Aorta (tissue), 5 donors: ENCODE measurements at regions of chr1 and their contacts with region 1.

Region 1: GRCh38 chr1:27481994-27482620 is 7.9 kb downstream of the WASF2 start:
- DNase-seq: no peak
- ATAC-seq: no peak
- H3K4me3 ChIP-seq: no peak overlapping the region
- H3K27ac ChIP-seq: no peak overlapping the region
- H3K4me1 ChIP-seq: peaks cover 2 to 3% of the 10 kb centered on the region in 2 donors
- H3K27me3 ChIP-seq: no peaks in the 10 kb centered on the region

Region 2: DNA sequence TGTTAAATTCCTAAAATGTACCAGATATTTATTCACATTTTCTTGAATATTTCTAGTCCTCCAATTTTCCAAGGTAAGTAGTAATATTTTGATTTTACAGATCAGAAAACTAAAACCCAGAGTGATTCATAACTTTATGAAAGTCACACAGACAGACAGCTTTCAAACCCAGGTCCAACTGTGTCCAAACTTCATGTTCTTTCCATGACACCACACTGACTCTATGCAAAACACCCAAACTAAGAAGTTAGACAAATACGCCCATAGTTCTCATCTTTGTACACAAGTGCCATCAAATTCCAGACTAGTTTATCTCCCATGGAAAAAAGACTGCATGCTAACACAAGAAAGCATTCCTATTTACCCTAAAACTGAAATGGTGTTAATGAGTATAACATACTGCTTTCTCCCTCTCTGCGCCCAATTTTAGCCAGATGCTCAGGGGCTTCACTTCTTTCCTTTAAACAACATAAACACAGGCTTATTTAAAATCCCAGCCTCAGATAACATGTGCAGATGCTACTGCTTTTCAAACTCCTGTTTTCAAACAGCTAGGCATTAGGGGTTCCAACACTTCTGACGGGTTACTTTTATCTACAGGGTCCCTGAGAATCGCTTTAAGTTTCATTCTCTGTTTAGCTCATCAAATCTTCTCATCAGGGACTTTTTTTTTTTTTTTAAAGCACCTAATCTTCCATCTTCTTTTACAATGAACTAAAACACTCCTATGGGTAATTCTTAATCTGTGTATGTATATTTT is 36.8 kb before region 1 on chr1:
- intact Hi-C with region 1: loop called in 1 of 2 experiments (anchors 5 kb)
- DNase-seq: no peak
- ATAC-seq: no peak
- H3K4me3 ChIP-seq: no peak overlapping the region
- H3K27ac ChIP-seq: no peak overlapping the region
- H3K4me1 ChIP-seq: peaks cover 0 to 4% of the 10 kb centered on the region in 2 donors
- H3K27me3 ChIP-seq: no peaks in the 10 kb centered on the region

Region 3: GRCh38 chr1:27536767-27537166 is 54.7 kb after region 1 on chr1:
- intact Hi-C with region 1: no loop called
- DNase-seq: peak in 1 of 2 donors; percentile 82
- ATAC-seq: peak; percentile 87
- H3K4me3 ChIP-seq: no peak overlapping the region
- H3K27ac ChIP-seq: no peak overlapping the region
- H3K4me1 ChIP-seq: no peaks in the 10 kb centered on the region
- H3K27me3 ChIP-seq: no peaks in the 10 kb centered on the region